ENCODE measurements at regions of chr18 and their contacts with region 1.

Region 1: GRCh38 chr18:5879479-5879882 is 15.8 kb downstream of the TMEM200C start:
- DNase-seq: no peak
- H3K4me3 ChIP-seq: no peak overlapping the region
- H3K27ac ChIP-seq: no peak overlapping the region
- H3K4me1 ChIP-seq: no peaks in the 10 kb centered on the region
- H3K27me3 ChIP-seq: peaks cover 0 to 17% (median 0%) of the 10 kb centered on the region in 7 donors
- CTCF ChIP-seq: peak in 10 of 11 experiments; percentile 18 to 76 (median 60)
- POLR2A ChIP-seq: no peak

Region 2: DNA sequence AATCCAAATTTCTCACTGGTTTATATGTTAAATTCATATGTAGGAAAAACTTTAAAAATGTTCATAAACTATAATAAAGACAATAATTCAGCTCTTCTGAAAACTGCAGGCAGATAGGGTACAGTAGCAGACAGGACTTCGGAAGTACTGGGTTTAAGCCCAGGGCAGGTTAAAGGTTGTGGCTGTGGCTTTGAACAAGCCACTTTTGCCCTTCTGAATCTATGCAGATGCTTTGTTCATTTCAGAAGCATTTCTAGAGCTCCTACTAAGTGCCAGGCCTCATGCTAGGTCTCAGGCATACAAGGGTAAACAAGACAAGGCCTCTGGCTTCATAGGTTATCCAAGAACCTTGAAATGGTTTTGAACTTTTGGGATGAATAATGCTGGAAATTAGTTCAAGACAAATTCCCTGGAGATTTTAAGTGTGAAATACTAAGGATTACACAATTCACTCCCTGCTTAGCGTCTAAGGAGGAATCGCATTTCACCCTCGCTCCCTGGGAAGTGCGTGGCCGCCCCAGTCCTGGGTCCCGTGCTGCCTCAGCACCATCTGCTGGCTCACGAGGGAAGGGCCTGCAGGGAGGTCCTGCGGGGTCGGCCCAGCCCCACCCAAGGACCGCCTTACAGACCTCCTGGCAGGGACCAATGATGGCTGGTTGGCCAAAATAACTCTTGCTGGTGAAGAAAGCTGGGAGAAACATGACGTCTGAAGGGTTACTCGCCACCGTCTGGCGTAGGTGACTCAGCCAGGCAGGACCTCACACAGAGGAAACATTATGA is 602.9 kb after region 1 on chr18:
- intact Hi-C with region 1: loop called (anchors 5 kb)
- DNase-seq: peak; percentile 82
- H3K4me3 ChIP-seq: no peak overlapping the region
- H3K27ac ChIP-seq: no peak overlapping the region
- H3K4me1 ChIP-seq: peaks cover 0 to 8% (median 5%) of the 10 kb centered on the region in 6 donors
- H3K27me3 ChIP-seq: peaks cover 0 to 5% (median 0%) of the 10 kb centered on the region in 7 donors
- CTCF ChIP-seq: peak; percentile 38 to 81 (median 68)
- POLR2A ChIP-seq: no peak

Region 3: GRCh38 chr18:6885992-6886796 is 1006.7 kb after region 1 on chr18:
- intact Hi-C with region 1: loop called (anchors 10 kb)
- DNase-seq: no peak
- H3K4me3 ChIP-seq: no peak overlapping the region
- H3K27ac ChIP-seq: peak overlapping the region in 1 of 8 donors; percentile 27
- H3K4me1 ChIP-seq: peaks cover 0 to 7% (median 0%) of the 10 kb centered on the region in 6 donors
- H3K27me3 ChIP-seq: no peaks in the 10 kb centered on the region
- CTCF ChIP-seq: peak in 9 of 11 experiments; percentile 15 to 67 (median 54)
- POLR2A ChIP-seq: no peak

Measured in spleen (tissue), 13 donors.